Caco-2 (cell line): ENCODE measurements at regions of chr5 and their contacts with region 1.

Region 1: GRCh38 chr5:73693481-73694061 is 67.6 kb downstream of the ARHGEF28 start:
- DNase-seq: peak in 1 of 2 experiments; percentile 21
- H3K4me3 ChIP-seq: no peak overlapping the region
- H3K4me3 Mint-ChIP-seq: no peak overlapping the region
- H3K27ac Mint-ChIP-seq: no peak overlapping the region
- H3K4me1 ChIP-seq: no peaks in the 10 kb centered on the region
- H3K4me1 Mint-ChIP-seq: no peaks in the 10 kb centered on the region
- H3K27me3 ChIP-seq: no peaks in the 10 kb centered on the region
- H3K27me3 Mint-ChIP-seq: peaks cover 11% of the 10 kb centered on the region
- CTCF ChIP-seq: peak; percentile 39 to 68

Region 2: DNA sequence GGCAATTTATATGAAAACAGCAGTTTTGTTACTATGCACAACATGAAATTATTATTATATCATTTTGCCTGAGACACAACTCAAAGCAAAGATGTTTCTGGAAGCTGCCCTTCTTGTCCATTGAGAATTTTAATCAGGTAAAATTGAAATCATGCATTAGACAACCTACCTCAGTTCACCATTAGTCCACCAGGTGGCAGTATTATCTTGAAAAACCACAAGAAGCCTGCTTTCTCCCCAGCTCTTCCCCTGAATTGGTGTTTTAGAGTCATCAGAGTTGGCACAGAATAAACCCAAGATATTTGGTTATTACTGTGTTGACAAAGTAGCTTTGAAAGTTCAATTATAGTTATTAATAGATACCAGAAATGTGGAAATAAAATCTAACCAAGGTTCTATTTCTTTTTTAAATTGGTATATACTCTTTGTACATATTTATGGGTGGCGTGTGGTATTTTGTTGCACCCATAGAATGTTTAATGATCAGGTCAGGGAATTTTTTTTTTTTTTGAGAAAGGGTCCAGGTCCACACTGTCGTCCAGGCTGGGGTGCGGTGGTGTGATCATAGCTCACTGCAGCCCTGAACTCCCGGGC is 102.4 kb before region 1 on chr5:
- CTCF ChIA-PET with region 1: interaction called, 22 read pairs
- POLR2A ChIA-PET with region 1: no interaction called
- intact Hi-C with region 1: loop called (anchors 1 kb)
- DNase-seq: peak; percentile 45 to 69
- H3K4me3 ChIP-seq: no peak overlapping the region
- H3K4me3 Mint-ChIP-seq: no peak overlapping the region
- H3K27ac Mint-ChIP-seq: no peak overlapping the region
- H3K4me1 ChIP-seq: no peaks in the 10 kb centered on the region
- H3K4me1 Mint-ChIP-seq: no peaks in the 10 kb centered on the region
- H3K27me3 ChIP-seq: no peaks in the 10 kb centered on the region
- H3K27me3 Mint-ChIP-seq: no peaks in the 10 kb centered on the region
- CTCF ChIP-seq: peak; percentile 65 to 82

Region 3: GRCh38 chr5:73633060-73633459 is 60.5 kb before region 1 on chr5:
- CTCF ChIA-PET with region 1: no interaction called
- POLR2A ChIA-PET with region 1: no interaction called
- intact Hi-C with region 1: loop called (anchors 5 kb)
- DNase-seq: no peak
- H3K4me3 ChIP-seq: no peak overlapping the region
- H3K4me3 Mint-ChIP-seq: no peak overlapping the region
- H3K27ac Mint-ChIP-seq: no peak overlapping the region
- H3K4me1 ChIP-seq: peaks cover 5% of the 10 kb centered on the region; the same call in 1 of the 2 replicates
- H3K4me1 Mint-ChIP-seq: no peaks in the 10 kb centered on the region
- H3K27me3 ChIP-seq: no peaks in the 10 kb centered on the region; the same call in 1 of the 2 replicates
- H3K27me3 Mint-ChIP-seq: peaks cover 5% of the 10 kb centered on the region
- CTCF ChIP-seq: no peak

Region 4: GRCh38 chr5:73792687-73793320 is 99.2 kb after region 1 on chr5:
- CTCF ChIA-PET with region 1: no interaction called
- POLR2A ChIA-PET with region 1: no interaction called
- intact Hi-C with region 1: loop called (anchors 2 kb)
- DNase-seq: peak; percentile 76 to 81
- H3K4me3 ChIP-seq: no peak overlapping the region
- H3K4me3 Mint-ChIP-seq: no peak overlapping the region
- H3K27ac Mint-ChIP-seq: no peak overlapping the region
- H3K4me1 ChIP-seq: peaks cover 9% of the 10 kb centered on the region
- H3K4me1 Mint-ChIP-seq: peaks cover 13% of the 10 kb centered on the region
- H3K27me3 ChIP-seq: no peaks in the 10 kb centered on the region
- H3K27me3 Mint-ChIP-seq: no peaks in the 10 kb centered on the region
- CTCF ChIP-seq: peak; percentile 93 to 96